ENCODE measurements at regions of chr2 and their contacts with region 1.

Region 1: DNA sequence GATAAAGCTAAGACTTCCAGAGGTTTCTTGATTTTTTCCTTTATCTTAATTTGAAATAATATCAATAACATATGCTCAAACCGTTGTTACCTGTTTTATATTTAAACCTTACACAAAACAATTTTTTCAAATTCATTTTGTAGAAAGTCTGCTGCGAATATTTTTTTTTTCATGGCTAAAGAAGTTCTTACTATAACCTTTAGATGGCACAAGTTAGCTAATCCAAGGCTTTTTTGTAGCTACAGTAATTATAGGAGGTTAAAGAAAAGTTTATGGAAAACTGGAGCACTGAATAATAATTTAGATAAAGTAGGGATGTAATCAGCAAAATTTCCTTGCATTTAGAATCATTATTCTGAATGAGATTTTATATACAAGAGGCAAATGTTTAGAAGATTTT is 78.0 kb upstream of the PNPT1 start:
- DNase-seq: no peak

Region 2: DNA sequence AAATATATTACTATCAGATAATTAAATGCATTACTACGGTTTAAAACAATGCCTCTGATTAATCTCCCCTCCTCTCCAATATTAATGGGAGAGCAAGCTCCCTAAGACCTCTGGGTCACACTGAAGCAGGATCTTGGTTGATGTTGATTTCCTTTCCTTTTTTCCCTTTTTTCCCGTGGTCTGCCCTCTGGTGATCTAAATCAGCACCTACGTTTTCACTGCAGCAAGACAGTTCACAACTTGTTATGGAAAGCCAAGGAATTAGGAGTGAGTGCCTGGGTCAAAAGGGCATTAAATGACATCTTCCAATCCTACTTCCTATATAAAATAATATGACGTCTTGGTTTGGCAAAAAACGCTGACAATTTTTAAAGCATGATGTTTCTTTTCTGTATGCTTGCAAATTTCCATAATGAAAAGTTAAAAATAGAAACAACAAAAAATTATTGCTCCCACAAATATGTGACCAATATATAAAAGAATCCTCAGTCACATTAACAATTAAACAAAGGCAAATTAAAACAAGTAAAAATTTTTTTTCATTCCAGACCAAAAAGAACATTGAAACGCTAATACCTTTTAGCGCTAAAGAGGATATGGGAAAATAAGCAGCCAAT is 260.0 kb before region 1 on chr2:
- intact Hi-C with region 1: no loop called
- DNase-seq: no peak

Region 3: DNA sequence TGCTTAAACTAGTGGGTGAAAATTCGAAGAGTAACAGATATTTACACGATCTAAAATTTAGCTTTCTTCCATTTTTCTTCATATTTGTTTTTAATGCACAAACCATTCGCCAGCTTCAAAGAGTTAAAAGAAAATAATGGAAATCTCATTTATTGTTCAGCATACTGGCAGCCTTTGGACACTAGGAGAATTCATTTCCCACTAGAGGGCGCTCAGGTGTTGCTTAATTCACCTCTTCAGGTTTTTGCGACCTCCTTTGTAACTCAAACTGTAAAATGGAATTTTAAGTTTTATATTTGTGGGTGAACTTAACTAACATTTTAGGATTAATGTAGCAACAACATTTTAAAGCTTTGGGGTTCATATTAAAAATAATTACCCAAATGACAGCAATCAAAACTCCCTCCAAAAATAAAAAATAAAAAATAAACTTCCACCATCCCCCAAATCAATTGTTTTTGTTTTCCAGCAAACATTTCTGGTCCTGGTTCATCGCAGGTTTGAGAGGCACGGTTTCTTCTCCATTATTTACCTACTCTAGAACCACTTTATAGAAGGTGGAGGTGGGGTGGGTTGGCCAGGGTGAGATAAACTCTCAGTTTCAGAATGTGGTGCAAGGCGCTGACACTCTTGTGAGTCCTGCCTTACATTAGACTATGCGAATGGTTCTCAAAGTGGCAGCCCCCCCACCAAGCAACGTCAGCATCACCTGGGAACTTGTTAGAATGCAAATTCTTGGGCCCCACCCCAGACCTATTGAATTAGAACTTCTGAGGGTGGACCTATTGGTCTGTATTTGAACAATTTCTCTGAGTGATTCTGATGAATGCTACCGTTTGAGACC is 53.2 kb before region 1 on chr2:
- intact Hi-C with region 1: loop called (anchors 5 kb)
- DNase-seq: peak in 4 of 10 donors; percentile 41 to 59 (median 45)

Region 4: DNA sequence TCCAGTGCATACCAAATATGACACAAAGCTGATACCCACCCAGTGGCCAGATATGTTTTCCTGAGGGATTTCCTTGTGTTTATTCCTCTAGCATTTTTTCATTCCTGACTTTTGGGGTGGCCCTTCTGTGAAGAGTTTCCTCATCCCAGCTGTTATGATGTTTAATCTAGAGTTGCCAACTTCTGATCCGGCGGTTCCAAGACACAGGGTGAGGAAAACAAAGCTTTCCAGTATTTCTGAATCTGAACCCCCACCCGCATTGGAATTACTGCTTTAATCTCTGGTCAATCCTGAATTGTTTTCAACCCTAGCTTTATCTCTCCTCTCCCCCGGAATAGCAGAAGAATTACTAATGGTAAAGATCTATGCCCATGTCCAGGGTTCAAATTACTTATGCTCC is 38.8 kb before region 1 on chr2:
- intact Hi-C with region 1: no loop called
- DNase-seq: no peak

Region 5: DNA sequence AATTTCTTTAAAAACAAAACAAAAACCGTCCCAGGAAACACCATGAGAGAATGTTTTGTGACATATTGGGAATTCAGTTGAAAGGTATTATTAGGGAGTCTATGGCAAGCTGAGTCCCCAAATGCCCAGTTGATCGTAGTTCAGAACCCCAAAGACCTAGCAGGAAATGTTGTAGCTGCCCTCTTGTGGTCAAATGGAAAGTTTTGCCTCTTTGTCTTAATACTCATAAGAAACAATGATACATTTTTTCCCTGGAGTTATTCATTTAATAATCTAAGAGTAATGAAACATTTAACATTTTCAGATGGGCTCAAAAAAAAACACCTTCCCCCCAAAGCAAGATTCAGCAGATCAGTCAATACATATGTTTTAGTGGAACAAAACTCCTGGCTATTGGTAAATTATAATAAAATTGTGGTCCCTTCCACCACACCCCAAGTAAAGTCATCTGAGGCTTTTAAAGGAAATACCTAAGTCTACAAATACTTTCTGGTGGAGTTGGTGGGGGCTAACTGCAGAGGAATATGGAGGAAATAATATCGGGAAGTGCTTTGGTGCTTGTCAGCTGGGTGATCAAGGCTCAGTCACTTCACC is 189.8 kb after region 1 on chr2:
- intact Hi-C with region 1: loop called (anchors 1 kb)
- DNase-seq: peak in 1 of 10 donors; percentile 2

Region 6: GRCh38 chr2:56009758-56010458 is 238.3 kb after region 1 on chr2:
- intact Hi-C with region 1: loop called (anchors 5 kb)
- DNase-seq: no peak

Measured in posterior cingulate gyrus (tissue), 11 donors.